IMR-90 (cell line): ENCODE measurements at regions of chr15 and their contacts with region 1.

Region 1: GRCh38 chr15:65516997-65517865 is at the start of gene DPP8:
- DNase-seq: peak; percentile 94
- ATAC-seq: peak; percentile 99
- H3K4me3 ChIP-seq: peak within 1 kb of the TSS; percentile 88
- H3K27ac ChIP-seq: peak within 1 kb of the TSS; percentile 89
- H3K4me1 ChIP-seq: peaks cover 4% of the 10 kb centered on the region
- H3K27me3 ChIP-seq: no peaks in the 10 kb centered on the region
- CTCF ChIP-seq: peak; percentile 94
- POLR2A ChIP-seq: peak; percentile 78
- RAD21 ChIP-seq: peak; percentile 27
- total RNA-seq, gene DPP8: 29.4 and 35.6 TPM in 2 replicates

Region 2: DNA sequence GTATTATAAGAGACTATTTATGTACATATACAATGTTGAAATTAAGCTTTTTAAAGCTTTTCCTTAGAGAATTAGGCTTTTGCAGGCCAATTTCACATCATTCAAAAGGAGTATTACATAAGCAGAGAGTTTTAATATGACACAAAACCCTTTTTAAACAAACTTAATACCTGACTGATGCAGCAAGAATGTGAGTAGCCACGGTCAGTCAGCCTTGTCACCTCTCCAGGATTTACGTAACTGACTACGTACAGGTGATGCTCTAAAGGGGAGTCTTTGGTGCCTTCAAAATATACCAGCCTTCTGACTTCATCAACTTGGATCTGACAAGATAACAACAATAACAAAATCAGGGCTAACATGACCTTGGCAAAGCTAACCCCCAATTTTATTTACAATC is 50.3 kb before region 1 on chr15:
- CTCF ChIA-PET with region 1: no interaction called
- POLR2A ChIA-PET with region 1: no interaction called
- dilution Hi-C with region 1: no loop called
- in situ Hi-C with region 1: no loop called
- intact Hi-C with region 1: no loop called
- DNase-seq: peak; percentile 66
- ATAC-seq: peak; percentile 27; the same call in 1 of the 2 replicates
- H3K4me3 ChIP-seq: no peak overlapping the region
- H3K27ac ChIP-seq: no peak overlapping the region
- H3K4me1 ChIP-seq: peaks cover 5% of the 10 kb centered on the region
- H3K27me3 ChIP-seq: no peaks in the 10 kb centered on the region
- CTCF ChIP-seq: no peak
- POLR2A ChIP-seq: no peak
- RAD21 ChIP-seq: no peak

Region 3: DNA sequence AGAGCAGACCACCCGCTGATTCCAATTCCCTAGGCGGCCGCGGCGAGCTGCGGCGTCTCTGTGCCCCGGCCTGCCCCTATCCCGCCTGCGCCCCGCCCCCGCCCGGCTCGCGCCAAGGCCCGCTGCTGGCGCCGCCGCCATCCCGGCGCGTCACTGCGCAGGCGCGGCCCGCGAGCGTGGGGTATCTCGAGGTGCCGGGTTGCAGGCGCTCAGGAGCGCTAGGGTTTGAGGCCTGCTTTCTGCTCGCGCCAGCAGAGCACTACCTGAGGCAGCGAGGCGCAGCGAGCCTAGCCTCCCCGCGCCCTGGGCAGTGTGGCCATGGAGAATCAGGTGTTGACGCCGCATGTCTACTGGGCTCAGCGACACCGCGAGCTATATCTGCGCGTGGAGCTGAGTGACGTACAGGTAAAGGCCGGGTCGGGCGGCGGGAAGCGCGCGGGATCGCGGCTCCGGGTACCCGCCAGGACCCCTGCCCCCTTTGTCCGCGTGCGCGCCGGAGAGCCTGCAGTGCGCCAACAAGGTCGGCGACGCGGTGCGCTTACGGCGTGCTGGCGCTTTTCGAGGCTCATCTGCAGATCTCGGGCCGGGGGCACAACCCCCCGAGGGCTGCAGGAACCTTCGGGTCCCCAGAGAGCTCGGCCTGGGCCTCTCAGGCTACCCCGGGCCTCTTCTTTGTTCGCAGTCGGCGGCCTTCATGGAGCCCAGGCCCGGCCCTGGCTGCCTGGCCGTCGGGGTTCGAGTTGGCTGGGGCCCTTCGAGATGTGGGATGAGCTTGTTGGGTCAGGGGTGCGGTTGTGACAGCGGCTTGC is 13.3 kb after region 1 on chr15 and contains the start of gene HACD3:
- CTCF ChIA-PET with region 1: interaction called, 4 read pairs
- POLR2A ChIA-PET with region 1: no interaction called
- dilution Hi-C with region 1: no loop called
- in situ Hi-C with region 1: no loop called
- intact Hi-C with region 1: loop called (anchors 2 kb)
- DNase-seq: peak; percentile 69
- ATAC-seq: peak; percentile 93
- H3K4me3 ChIP-seq: peak within 1 kb of the TSS; percentile 63
- H3K27ac ChIP-seq: peak within 1 kb of the TSS; percentile 78
- H3K4me1 ChIP-seq: peaks cover 11% of the 10 kb centered on the region
- H3K27me3 ChIP-seq: no peaks in the 10 kb centered on the region
- CTCF ChIP-seq: no peak
- POLR2A ChIP-seq: no peak
- RAD21 ChIP-seq: no peak
- total RNA-seq, gene HACD3: 131 and 169 TPM in 2 replicates

Region 4: GRCh38 chr15:65595960-65596359 is 78.7 kb after region 1 on chr15:
- CTCF ChIA-PET with region 1: no interaction called
- POLR2A ChIA-PET with region 1: no interaction called
- dilution Hi-C with region 1: no loop called
- in situ Hi-C with region 1: no loop called
- intact Hi-C with region 1: no loop called
- DNase-seq: no peak
- ATAC-seq: no peak
- H3K4me3 ChIP-seq: no peak overlapping the region
- H3K27ac ChIP-seq: no peak overlapping the region
- H3K4me1 ChIP-seq: no peaks in the 10 kb centered on the region
- H3K27me3 ChIP-seq: no peaks in the 10 kb centered on the region
- CTCF ChIP-seq: peak; percentile 31
- POLR2A ChIP-seq: no peak
- RAD21 ChIP-seq: peak; percentile 38

Region 5: DNA sequence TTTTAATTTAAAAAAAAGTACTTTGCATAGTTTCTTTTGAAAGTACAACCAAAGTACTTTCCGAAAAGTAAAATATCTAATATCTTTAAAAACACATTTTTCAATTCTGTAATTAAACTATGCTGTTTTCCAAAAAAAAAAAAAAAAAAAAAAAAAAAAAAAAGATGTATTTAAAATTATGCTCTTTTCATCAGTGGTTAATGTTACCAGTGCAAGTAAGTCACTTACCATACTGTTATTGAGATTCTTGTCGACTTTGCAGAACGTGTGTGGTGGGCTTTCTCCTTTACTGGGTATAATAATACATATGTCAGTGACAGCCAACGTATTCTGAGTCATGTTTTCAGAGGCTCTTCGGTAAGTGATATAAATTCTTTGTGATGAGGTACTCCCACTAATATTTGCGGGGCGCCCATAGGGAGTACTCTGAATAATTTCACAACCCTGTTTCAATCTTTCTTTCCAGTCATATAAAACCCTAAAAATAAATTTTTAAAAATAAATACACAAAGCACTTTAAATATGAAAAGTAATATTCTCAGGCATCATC is 235.0 kb after region 1 on chr15:
- CTCF ChIA-PET with region 1: no interaction called
- POLR2A ChIA-PET with region 1: no interaction called
- dilution Hi-C with region 1: no loop called
- in situ Hi-C with region 1: no loop called
- intact Hi-C with region 1: no loop called
- DNase-seq: peak; percentile 63
- ATAC-seq: peak; percentile 44
- H3K4me3 ChIP-seq: no peak overlapping the region
- H3K27ac ChIP-seq: no peak overlapping the region
- H3K4me1 ChIP-seq: no peaks in the 10 kb centered on the region
- H3K27me3 ChIP-seq: no peaks in the 10 kb centered on the region
- CTCF ChIP-seq: no peak
- POLR2A ChIP-seq: no peak
- RAD21 ChIP-seq: no peak